Left cardiac atrium (tissue), 4 donors: ENCODE measurements at regions of chr11 and their contacts with region 1.

Region 1: GRCh38 chr11:122853971-122854446 is 15.7 kb downstream of the CRTAM start:
- DNase-seq: no peak
- ATAC-seq: peak; percentile 47

Region 2: GRCh38 chr11:122584670-122585069 is 269.3 kb before region 1 on chr11:
- intact Hi-C with region 1: loop called in 1 of 2 experiments (anchors 5 kb)
- DNase-seq: no peak
- ATAC-seq: no peak

Region 3: DNA sequence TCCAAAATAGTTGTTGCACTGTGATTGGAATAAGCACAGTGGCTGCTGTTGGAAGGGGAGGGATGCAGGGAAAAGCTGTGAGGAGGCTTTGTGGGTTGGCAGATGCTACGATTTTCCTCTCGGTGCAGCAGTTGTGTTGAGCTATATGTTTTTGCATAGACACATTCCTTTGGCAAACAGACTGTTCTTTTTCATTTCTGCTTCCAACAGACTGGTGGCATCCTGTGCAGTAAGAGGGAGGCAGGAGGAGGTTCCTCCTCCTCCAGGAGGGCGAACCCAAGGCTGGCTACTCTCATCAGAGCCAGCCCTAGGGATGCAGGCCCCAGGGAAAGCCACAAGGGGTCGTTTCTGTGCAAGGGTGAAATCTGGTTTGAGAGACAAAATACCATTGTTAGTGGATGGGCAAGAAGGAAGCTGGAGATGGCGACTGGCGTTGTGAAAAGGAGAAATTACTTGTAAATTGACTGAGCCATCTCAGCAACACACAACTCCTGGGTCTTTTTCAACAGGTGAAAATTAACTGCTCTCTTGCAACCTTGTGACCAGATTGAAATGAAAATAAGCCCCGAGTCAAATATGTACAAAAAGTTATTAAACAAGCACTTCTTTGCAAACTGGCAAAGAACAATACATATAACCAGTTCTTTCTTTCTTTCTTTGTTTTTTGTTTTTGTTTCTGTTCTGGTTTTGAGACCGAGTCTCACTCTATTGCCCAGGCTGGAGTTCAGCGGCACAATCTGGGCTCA is 225.0 kb before region 1 on chr11:
- intact Hi-C with region 1: loop called in 1 of 2 experiments (anchors 2 kb)
- DNase-seq: peak; percentile 62
- ATAC-seq: peak; percentile 71 to 89

Region 4: DNA sequence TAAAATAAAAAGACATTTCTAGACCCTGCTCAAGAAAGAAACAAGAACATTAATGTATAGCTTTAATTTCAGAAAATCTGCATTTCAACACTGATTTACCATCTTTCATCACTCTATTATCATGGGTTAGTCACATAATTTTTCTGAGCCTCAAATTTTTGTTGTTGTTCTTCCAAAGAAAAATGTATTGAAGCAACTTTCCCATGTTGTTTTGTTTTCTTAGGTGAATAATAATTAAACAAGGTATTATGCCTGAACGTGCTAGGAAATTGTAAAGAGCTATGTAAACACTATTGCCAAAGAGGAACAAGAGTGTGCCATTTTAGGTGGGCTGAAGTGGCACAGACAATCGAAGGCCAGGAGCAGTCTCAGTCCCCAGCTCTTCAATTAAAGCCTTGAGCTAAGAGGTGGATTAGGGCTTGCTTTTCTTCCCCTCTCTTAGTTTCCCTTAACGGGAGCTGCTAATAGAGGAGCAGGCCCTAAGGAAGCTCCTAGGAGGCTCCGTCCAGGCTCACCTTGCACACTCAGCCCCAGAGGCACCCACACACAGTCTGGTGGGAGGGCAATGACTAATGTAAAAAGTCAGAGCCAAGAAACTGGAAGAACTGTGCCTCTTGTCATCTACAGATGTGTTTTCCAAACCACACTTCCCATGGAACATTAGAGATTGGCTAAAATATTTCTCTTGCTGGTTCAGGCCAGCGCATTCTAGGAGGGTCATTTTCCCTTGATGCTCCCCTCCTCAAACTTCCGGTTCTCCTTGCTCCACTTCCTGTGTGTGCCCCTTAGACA is 207.3 kb before region 1 on chr11:
- intact Hi-C with region 1: no loop called
- DNase-seq: no peak
- ATAC-seq: peak in 1 of 2 donors; percentile 41

Region 5: DNA sequence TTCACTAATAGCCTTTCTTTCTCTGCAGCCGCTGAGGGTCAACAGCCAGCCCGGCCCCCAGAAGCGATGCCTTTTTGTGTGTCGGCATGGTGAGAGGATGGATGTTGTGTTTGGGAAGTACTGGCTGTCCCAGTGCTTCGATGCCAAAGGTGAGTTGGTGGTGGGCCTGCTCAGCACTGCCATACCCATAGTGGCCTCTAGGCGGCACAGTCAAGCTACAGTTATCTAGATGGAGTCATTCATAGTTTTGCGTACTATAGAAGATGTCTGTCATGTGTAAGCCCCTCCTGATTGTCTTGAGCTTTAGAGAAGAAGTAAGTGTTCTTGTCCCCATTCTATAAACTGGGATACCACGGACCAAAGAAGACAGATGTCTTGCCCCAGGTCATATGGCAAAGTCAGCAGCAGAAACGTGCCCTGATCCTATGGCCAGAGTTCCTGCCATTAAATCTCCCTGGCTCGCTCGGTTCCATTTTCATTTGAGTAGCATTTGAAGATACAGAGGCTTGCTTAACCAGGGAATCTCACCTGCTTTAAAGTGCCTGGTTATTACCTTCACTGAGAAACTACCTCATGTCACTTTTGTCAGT is 57.8 kb before region 1 on chr11:
- intact Hi-C with region 1: loop called (anchors 5 kb)
- DNase-seq: no peak
- ATAC-seq: peak; percentile 34 to 58